Vagina (tissue), 2 donors: ENCODE measurements at regions of chr16 and their contacts with region 1.

Region 1: DNA sequence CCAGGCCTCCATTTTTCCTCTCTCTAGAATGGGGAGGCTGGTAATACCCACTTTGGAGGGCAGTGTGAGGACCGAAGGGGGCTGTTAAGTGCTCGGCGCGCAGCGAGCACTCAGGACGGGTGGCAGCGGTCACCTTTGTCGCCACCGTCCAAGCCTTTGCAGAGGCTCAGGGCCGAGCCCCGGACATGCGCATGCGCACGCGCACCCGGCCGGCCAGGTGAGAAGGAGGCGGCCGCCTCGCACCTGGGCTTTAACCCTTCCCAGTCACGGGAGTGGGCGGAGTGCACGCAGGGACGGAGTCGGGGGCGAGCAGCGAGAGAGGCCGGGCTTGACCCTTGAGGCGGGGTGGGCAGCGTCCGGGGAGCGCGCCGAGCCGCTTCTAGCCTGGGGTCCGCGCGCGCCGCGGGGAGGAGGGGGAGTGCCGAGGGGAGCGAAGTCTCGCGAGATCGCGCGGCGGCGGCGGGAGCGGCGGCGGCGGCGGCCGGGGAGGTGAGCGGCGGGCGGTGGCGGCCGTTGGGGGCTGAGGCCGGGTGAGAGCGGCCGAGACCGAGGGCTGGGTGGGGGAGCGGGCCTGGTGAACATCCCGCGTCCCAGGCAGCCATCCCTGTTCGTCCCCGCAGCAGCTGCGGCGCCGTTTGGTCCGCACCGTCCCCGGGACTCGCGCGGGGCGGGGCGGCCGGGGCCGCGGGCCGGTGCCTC is at the start of gene MRTFB:
- DNase-seq: no peak
- H3K4me3 ChIP-seq: peak within 1 kb of the TSS; percentile 72 to 97
- H3K27ac ChIP-seq: peak within 1 kb of the TSS; percentile 82
- H3K4me1 ChIP-seq: peaks cover 31% of the 10 kb centered on the region
- H3K27me3 ChIP-seq: no peaks in the 10 kb centered on the region
- CTCF ChIP-seq: no peak
- POLR2A ChIP-seq: peak in 1 of 2 donors; percentile 37
- total RNA-seq, gene MRTFB: 103 TPM

Region 2: GRCh38 chr16:13957197-13958078 is 113.6 kb before region 1 on chr16:
- intact Hi-C with region 1: loop called (anchors 5 kb)
- DNase-seq: peak in 1 of 2 donors; percentile 94
- H3K4me3 ChIP-seq: peak overlapping the region; percentile 26 to 39
- H3K27ac ChIP-seq: peak overlapping the region; percentile 76
- H3K4me1 ChIP-seq: peaks cover 31% of the 10 kb centered on the region
- H3K27me3 ChIP-seq: no peaks in the 10 kb centered on the region
- CTCF ChIP-seq: peak in 1 of 3 experiments; percentile 24
- POLR2A ChIP-seq: peak in 1 of 2 donors; percentile 1

Region 3: DNA sequence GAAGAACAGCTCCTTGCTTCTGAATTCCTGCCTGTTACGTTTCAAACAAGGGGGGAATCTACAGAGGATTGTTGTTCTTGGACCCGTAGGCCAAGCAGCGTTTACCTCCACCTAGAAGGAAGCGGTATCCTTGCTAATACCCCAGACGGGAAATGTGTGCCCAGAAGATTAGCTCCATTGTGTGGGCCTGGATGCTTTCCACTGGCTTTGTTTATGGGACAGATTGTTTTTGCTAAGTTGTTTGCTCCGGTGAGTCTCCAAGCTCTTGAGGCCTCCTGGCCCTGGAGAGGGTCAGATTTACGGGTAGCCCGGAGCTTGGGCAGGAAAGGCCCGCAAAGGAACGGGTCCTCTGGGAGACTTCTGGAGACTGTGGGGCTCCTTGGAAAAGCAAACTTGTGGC is 28.3 kb before region 1 on chr16:
- intact Hi-C with region 1: loop called (anchors 1 kb)
- DNase-seq: no peak
- H3K4me3 ChIP-seq: no peak overlapping the region
- H3K27ac ChIP-seq: no peak overlapping the region
- H3K4me1 ChIP-seq: no peaks in the 10 kb centered on the region
- H3K27me3 ChIP-seq: no peaks in the 10 kb centered on the region
- CTCF ChIP-seq: no peak
- POLR2A ChIP-seq: no peak

Region 4: GRCh38 chr16:14057878-14058382 is 13.1 kb before region 1 on chr16:
- intact Hi-C with region 1: no loop called
- DNase-seq: no peak
- H3K4me3 ChIP-seq: no peak overlapping the region
- H3K27ac ChIP-seq: no peak overlapping the region
- H3K4me1 ChIP-seq: no peaks in the 10 kb centered on the region
- H3K27me3 ChIP-seq: no peaks in the 10 kb centered on the region
- CTCF ChIP-seq: no peak
- POLR2A ChIP-seq: no peak

Region 5: GRCh38 chr16:14186007-14186794 is 115.2 kb after region 1 on chr16:
- intact Hi-C with region 1: loop called (anchors 10 kb)
- DNase-seq: no peak
- H3K4me3 ChIP-seq: peak overlapping the region; percentile 46 to 50
- H3K27ac ChIP-seq: peak overlapping the region; percentile 80
- H3K4me1 ChIP-seq: peaks cover 31% of the 10 kb centered on the region
- H3K27me3 ChIP-seq: no peaks in the 10 kb centered on the region
- CTCF ChIP-seq: peak in 1 of 3 experiments; percentile 36
- POLR2A ChIP-seq: no peak